CD4-positive, alpha-beta T cell (primary cell): ENCODE measurements at regions of chr11 and their contacts with region 1.

Region 1: DNA sequence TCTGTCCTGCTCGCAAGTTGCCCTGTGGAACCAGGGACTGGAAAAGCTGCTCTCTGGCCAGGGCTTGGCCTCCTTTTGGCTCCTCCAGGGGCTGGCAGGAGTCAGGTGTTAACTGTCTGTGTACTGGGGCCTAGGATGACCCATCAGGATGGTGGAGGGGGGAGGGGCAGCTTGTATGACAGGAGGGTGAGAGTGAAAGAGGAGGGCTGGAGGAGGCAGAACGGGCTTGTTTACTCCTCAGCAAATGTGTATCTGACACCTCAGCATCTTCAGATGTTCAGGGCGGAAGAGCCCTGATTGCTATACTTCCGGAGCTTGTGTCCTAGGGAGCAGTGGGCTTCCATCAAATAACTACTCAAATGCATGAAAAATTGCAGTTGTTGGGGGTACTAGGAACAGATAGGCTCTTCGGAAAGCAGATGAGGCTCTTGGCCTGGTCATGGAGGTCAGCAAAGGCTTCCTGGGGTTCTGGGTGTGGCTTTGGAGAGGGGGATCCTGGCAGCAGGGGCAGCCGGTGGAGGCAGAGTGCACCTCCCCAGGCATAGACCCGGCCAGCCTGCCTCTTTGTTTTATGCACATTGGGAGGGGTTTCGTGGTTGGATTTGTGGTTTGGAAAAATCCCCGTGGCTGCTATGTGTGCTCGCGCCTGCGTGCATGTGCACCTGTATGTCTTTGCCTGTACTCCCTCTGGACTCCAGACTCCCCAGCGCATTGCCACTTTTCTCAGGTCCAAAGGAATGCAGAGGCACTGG is 31.2 kb downstream of the CD82 start:
- DNase-seq: peak; percentile 31 to 93 (median 58)
- ATAC-seq: peak; percentile 88
- H3K4me3 ChIP-seq: peak overlapping the region; percentile 30
- H3K4me3 Mint-ChIP-seq: peak overlapping the region; percentile 53
- H3K27ac ChIP-seq: peak overlapping the region; percentile 77 to 83
- H3K27ac Mint-ChIP-seq: peak overlapping the region; percentile 98
- H3K4me1 ChIP-seq: peaks cover 88% of the 10 kb centered on the region
- H3K4me1 Mint-ChIP-seq: peaks cover 84% of the 10 kb centered on the region
- H3K27me3 ChIP-seq: no peaks in the 10 kb centered on the region
- H3K27me3 Mint-ChIP-seq: no peaks in the 10 kb centered on the region
- CTCF ChIP-seq: no peak

Region 2: DNA sequence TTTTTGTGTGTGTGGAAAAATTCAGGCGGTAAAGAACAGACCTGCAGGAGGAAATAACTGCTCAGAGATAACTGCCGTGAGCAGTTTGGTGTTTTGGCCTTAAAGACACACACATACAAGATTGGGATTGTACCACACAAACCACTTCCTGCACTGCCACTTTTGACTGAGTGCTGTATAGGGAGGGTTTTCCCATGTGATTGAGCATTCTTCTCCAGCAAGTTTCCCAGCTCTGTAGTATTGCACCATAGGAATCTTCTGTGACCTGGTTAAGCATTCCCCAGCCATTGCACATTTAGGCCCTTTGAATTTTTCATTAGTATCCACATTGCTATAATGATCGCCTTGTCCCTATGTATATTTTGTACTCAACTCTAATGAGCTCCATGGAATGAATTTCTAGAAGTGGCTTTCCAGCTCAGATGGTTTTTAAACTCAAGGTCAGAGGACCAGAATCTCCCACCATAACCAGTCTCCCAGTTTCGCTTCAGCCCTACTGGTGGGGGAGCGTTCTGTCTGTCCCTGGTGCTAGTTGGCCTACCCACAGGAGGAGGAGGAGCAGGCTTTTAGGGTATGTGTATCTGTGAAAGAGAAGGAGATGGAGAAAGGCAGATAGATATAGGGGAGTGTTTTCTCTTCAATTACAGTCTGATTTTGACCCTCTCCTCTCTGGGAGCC is 22.0 kb before region 1 on chr11:
- CTCF ChIA-PET with region 1: interaction called, 3 read pairs
- POLR2A ChIA-PET with region 1: interaction called, 54 read pairs
- intact Hi-C with region 1: loop called in 1 of 2 experiments (anchors 2 kb)
- DNase-seq: peak in 5 of 14 experiments; percentile 25 to 78 (median 74)
- ATAC-seq: peak; percentile 79
- H3K4me3 ChIP-seq: peak overlapping the region; percentile 3
- H3K4me3 Mint-ChIP-seq: peak overlapping the region; percentile 72
- H3K27ac ChIP-seq: peak overlapping the region; percentile 55 to 64
- H3K27ac Mint-ChIP-seq: peak overlapping the region; percentile 67
- H3K4me1 ChIP-seq: peaks cover 99% of the 10 kb centered on the region
- H3K4me1 Mint-ChIP-seq: peaks cover 94% of the 10 kb centered on the region
- H3K27me3 ChIP-seq: no peaks in the 10 kb centered on the region
- H3K27me3 Mint-ChIP-seq: no peaks in the 10 kb centered on the region
- CTCF ChIP-seq: no peak

Region 3: DNA sequence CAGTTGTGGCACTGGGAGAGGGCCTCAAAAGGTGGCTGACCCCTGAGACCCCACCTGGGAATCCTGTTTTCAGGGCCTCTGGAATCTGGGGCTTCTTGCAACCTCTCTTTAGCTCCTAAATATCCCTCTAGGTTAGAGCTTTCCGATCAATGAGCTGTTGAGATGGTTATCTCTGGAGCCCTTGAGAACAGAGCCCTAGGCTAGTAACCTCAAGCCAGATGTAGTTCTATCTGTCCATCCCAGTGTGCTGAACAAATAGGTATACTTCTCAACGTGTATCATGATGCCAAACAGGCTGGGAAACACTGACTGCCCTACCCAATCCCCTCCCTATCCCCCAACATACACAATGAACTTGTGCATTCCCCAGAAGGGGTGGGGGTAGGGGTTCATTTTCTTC is 14.1 kb before region 1 on chr11:
- CTCF ChIA-PET with region 1: no interaction called
- POLR2A ChIA-PET with region 1: interaction called, 13 read pairs
- intact Hi-C with region 1: no loop called
- DNase-seq: no peak
- ATAC-seq: no peak
- H3K4me3 ChIP-seq: no peak overlapping the region
- H3K4me3 Mint-ChIP-seq: no peak overlapping the region
- H3K27ac ChIP-seq: no peak overlapping the region
- H3K27ac Mint-ChIP-seq: peak overlapping the region; percentile 39
- H3K4me1 ChIP-seq: peaks cover 71% of the 10 kb centered on the region
- H3K4me1 Mint-ChIP-seq: peaks cover 43% of the 10 kb centered on the region
- H3K27me3 ChIP-seq: no peaks in the 10 kb centered on the region
- H3K27me3 Mint-ChIP-seq: no peaks in the 10 kb centered on the region
- CTCF ChIP-seq: no peak

Region 4: DNA sequence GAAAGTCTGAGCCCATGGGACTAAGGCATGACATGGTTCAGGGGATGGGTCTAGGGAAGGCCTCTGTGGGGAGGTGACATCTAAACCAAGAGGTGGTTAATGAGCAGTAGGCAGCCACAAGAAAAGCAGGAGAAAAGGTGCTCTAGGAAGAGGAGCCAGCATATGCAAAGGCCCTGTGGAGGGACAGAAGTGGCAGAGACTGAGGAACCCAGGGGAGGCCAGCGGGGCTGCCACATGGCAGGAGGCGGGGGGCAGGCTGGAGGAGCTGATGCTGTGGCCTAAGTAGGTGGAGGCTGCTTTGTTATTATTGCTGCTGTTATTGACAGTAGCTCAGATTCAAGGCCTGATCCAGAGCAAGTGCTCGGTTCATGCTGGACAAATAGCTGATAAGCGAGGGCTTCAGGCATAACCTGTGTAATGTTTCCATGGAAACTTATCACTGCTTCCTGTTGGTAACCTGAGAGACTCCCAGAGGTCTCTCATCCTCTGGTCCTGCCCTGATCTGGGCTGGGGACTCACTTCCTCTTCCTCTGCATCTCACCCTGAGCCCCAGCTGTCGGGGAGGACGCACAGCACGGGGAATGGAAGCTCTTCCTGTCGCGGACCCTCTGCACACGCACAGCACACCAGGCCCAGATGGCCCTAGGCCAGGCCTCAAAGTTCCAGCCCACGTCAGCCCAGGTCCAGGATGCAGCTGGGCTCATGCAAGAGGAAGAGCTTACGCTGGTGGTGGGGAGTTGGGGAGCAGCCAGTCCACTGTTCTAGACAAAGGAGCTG is 429.2 kb after region 1 on chr11:
- CTCF ChIA-PET with region 1: no interaction called
- POLR2A ChIA-PET with region 1: no interaction called
- intact Hi-C with region 1: no loop called
- DNase-seq: peak in 5 of 14 experiments; percentile 6 to 40 (median 22)
- ATAC-seq: peak; percentile 48
- H3K4me3 ChIP-seq: no peak overlapping the region
- H3K4me3 Mint-ChIP-seq: no peak overlapping the region
- H3K27ac ChIP-seq: no peak overlapping the region
- H3K27ac Mint-ChIP-seq: no peak overlapping the region
- H3K4me1 ChIP-seq: peaks cover 10% of the 10 kb centered on the region
- H3K4me1 Mint-ChIP-seq: peaks cover 13% of the 10 kb centered on the region
- H3K27me3 ChIP-seq: peaks cover 0 to 2% of the 10 kb centered on the region in 2 experiments
- H3K27me3 Mint-ChIP-seq: no peaks in the 10 kb centered on the region
- CTCF ChIP-seq: no peak

Region 5: DNA sequence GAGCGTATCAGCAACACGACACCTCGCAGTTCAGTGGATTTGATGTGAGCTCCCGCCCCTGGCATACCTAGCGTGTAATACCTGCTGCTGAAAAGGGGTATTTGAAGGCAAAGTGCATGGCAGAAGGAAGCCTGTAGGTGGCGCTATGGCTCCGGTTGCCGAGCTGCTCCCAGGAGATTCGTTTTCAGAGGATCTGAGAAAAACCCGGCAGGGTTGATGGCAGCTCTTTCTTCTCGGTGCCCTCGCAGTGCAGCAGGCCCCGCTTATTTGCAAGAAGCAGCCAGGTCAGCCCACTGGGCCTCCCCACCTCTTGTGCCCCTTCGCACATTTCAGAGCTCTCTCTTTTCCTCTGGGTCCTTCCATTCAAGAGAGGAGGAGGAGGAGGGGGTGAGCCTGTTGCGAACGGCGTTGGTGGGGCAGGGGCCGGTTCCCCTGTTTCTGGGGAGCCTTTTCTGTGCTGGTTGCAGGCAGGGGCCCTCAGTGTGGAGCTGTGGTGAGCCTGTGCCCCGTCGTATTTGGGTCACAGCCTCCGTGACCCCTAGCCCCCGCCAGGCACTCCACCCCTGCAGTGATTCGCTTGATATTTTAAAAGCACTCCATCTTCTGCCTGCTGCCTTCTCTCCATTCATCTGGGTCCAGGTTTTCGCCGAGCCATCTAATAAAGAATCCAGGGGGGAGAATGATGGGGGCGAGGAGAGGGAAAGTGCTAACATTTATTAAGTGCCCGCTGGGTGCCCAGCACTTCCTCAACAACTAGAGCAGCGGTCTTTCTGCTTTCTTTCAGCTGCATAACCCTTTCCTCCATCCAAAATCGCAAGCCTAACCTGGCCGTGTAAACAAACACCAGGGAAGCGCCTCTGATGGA is 774.8 kb after region 1 on chr11:
- CTCF ChIA-PET with region 1: no interaction called
- POLR2A ChIA-PET with region 1: no interaction called
- intact Hi-C with region 1: no loop called
- DNase-seq: peak; percentile 38 to 84 (median 54)
- ATAC-seq: peak; percentile 68
- H3K4me3 ChIP-seq: no peak overlapping the region
- H3K4me3 Mint-ChIP-seq: no peak overlapping the region
- H3K27ac ChIP-seq: no peak overlapping the region
- H3K27ac Mint-ChIP-seq: no peak overlapping the region
- H3K4me1 ChIP-seq: peaks cover 34% of the 10 kb centered on the region
- H3K4me1 Mint-ChIP-seq: peaks cover 33% of the 10 kb centered on the region
- H3K27me3 ChIP-seq: no peaks in the 10 kb centered on the region
- H3K27me3 Mint-ChIP-seq: peaks cover 28% of the 10 kb centered on the region
- CTCF ChIP-seq: peak; percentile 66